ENCODE measurements at regions of chr3 and their contacts with region 1.

Region 1: DNA sequence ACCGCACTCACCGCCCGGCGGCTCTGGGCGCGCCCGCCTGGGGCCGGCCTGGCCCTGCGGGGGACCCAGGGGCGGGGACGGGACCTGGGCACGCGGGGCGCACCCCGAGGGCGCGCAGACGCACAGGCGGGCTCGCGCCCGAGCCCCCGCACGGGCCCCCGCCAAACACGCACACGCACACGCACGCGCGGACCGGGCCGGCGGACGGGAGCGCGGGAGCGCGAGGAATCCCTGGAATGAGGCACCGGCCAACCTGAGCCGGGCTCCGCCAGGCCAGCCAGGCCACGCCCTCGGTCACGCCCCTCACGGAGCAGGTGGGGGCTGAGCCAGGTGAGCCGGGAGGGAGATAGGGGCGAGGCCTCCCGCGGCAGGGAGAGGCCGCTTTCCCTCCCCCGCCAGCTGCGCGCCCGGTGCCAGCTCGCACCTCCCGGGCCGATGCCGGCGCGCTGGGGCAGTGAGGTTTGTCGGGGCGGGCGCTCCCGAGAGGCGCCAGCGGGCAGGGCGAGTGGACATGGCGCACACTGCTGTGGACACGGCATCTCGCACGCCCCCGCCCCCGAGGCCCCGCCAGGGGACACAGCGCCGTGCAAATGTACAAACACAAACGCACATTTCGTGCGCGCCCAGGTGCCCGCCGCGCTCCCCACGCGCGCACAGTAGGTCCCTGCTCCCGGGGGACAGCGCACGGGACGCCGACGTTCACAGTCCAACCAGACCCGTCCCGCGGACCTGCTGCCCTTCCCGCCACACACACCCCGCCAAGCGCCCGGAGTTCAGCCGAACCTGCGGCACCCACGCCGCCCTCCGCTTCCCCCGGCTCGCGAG is 75.9 kb upstream of the VGLL4 start:
- DNase-seq: peak; percentile 34
- H3K4me3 Mint-ChIP-seq: peak overlapping the region; percentile 49
- H3K27ac Mint-ChIP-seq: no peak overlapping the region
- H3K4me1 Mint-ChIP-seq: peaks cover 22% of the 10 kb centered on the region
- H3K27me3 Mint-ChIP-seq: peaks cover 24% of the 10 kb centered on the region

Region 2: GRCh38 chr3:11379233-11379823 is 340.3 kb before region 1 on chr3:
- intact Hi-C with region 1: loop called (anchors 10 kb)
- DNase-seq: no peak
- H3K4me3 Mint-ChIP-seq: no peak overlapping the region
- H3K27ac Mint-ChIP-seq: no peak overlapping the region
- H3K4me1 Mint-ChIP-seq: no peaks in the 10 kb centered on the region
- H3K27me3 Mint-ChIP-seq: no peaks in the 10 kb centered on the region

Region 3: GRCh38 chr3:11764931-11765363 is 45.3 kb after region 1 on chr3:
- intact Hi-C with region 1: loop called (anchors 1 kb)
- DNase-seq: peak; percentile 8
- H3K4me3 Mint-ChIP-seq: peak overlapping the region; percentile 13
- H3K27ac Mint-ChIP-seq: peak overlapping the region; percentile 46
- H3K4me1 Mint-ChIP-seq: peaks cover 12% of the 10 kb centered on the region
- H3K27me3 Mint-ChIP-seq: no peaks in the 10 kb centered on the region

Region 4: DNA sequence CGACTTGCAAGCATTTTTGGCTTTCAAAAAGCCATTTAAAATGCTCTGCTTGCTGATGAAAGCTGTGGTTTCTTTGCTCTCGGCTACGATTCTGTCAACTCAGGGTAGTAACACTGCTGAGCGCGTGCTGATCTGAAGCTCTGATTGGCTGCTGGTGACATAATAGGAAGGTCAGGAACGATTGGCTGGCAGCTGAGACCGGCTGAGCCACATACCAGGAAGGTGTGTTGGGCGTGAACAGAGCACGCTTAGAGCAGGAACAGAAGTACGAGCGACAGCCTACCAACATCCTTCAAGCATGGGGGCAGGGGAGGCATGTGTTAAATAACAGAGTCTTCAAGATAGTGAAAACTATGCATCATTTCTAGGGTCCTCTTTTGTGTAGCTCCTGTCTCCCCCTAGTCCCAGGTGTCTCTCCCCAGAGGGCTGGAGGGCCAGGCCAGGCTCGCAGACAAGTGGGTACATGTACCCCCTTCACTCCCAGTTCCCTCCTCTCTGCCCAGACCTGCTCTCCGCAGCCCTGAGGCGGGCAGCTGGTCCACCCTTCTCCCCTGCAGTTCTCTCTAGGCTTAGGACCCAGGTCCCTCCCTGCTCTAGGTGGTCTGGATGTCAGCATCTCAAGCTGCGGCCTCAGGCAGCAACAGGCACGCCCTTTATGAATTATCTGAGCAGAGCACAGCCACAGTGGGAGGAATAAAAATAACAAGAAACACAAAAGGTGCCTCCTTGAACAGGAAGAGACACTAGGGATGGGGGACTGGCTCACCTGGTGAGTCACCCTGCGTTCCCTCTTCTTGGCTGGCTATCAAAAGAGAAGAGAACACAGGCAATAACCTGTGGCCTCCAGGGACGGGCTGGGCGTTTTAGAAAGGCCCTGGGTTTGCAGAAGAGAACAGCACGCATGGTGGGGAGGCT is 51.1 kb after region 1 on chr3:
- intact Hi-C with region 1: loop called (anchors 1 kb)
- DNase-seq: peak; percentile 82
- H3K4me3 Mint-ChIP-seq: peak overlapping the region; percentile 21
- H3K27ac Mint-ChIP-seq: peak overlapping the region; percentile 82
- H3K4me1 Mint-ChIP-seq: peaks cover 20% of the 10 kb centered on the region
- H3K27me3 Mint-ChIP-seq: no peaks in the 10 kb centered on the region

Region 5: DNA sequence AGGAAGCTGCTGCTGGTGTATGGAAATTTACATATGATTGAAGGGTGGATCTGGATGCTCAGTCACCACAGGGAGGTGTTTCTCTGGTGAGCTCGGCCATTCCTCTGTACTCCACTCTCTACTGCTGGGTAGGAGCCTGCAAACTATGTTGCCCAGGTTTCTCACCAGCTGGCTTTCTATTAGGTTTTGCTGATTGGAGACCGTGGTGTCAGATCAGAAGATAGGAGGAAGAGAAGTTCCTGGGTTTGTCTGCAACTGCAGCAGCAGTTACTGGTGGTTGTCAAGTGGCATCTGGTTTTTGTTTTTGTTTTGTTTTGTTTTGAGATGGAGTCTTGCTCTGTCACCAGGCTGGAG is 65.4 kb after region 1 on chr3:
- intact Hi-C with region 1: loop called (anchors 5 kb)
- DNase-seq: peak; percentile 36
- H3K4me3 Mint-ChIP-seq: peak overlapping the region; percentile 72
- H3K27ac Mint-ChIP-seq: peak overlapping the region; percentile 96
- H3K4me1 Mint-ChIP-seq: peaks cover 21% of the 10 kb centered on the region
- H3K27me3 Mint-ChIP-seq: no peaks in the 10 kb centered on the region

Region 6: GRCh38 chr3:11803977-11804892 is 84.6 kb after region 1 on chr3:
- intact Hi-C with region 1: loop called (anchors 1 kb)
- DNase-seq: peak; percentile 16
- H3K4me3 Mint-ChIP-seq: no peak overlapping the region
- H3K27ac Mint-ChIP-seq: no peak overlapping the region
- H3K4me1 Mint-ChIP-seq: peaks cover 10% of the 10 kb centered on the region
- H3K27me3 Mint-ChIP-seq: no peaks in the 10 kb centered on the region